ENCODE measurements at regions of chr19 and their contacts with region 1.

Region 1: DNA sequence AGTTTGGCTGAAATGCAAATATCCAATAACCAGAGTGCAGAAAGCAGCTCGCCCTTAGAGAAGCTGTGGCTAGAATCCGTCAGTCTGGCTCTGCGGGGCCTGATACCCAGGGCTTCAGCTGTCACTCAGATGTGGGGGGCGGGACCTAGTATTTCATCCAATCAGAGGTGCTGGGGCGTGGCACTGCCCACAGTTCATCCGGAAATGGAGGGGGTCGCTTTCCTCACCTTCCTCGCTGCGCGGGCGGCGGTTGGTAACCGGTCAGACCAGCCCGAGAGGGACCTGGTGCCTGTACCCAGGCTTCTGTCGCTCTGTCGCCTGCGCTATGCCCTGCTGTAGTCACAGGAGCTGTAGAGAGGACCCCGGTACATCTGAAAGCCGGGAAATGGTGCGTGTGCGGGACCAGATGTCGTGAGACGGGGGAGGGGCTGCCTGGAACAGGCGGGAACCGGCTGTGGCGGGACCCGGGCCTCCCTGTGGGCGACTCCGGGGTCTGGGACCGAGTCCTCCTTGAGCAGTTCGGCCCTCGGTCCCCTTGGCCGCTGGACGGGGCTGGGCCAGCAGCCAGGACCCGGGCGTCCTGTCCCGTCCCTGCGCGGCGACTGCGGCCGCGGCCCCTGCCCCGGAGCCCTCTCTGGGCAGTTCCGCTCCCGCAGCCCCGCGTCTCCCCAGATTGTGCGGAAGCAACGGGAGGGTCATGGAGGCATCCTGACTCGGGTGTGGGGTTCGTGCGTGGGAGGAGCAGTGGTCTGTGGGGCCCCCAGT is at the start of gene ZNF700:
- DNase-seq: peak; percentile 98
- H3K4me3 ChIP-seq: peak within 1 kb of the TSS; percentile 79 to 98
- H3K27ac ChIP-seq: peak within 1 kb of the TSS; percentile 97 to 98
- H3K4me1 ChIP-seq: no peaks in the 10 kb centered on the region
- H3K27me3 ChIP-seq: no peaks in the 10 kb centered on the region
- CTCF ChIP-seq: peak in 1 of 4 experiments; percentile 15
- POLR2A ChIP-seq: peak; percentile 87
- total RNA-seq, gene ZNF700: 16.8 to 18.0 TPM

Region 2: DNA sequence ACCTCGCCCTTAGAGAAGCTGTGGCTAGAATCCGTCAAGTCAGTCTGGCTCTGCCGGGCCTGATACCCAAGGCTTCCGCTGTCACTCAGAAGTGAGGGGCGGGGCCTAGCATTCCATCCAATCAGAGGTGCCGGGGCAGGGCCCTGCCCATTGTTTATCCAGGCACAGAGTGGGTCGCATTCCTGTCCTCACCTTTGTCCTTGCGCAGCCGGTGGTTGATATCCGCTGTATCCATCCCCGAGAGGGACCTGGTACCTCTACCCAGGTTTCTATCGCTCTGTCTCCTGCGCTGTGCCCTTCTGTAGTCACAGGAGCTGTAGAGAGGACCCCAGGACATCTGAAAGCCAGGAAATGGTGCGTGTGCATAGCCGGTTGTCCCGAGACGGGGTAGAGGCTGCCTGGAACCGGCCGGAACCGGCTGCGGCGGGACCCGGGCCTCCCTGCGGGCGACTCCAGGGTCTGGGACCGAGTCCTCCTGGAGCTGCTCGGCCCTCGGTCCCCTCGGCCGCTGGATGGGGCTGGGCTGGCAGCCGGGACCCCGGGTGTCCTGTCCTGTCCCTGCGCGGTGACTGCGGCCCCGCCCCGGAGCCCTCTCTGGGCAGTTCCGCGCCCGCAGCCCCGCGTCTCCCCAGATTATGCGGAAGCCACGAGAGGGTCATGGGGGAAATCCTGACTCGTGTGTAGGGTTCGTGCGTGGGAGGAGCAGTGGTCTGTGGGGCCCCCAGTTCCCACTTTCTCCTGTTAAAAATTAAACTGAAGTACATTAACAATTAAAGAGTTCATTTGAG is 40.0 kb after region 1 on chr19 and contains the start of gene ZNF763:
- intact Hi-C with region 1: loop called (anchors 1 kb)
- DNase-seq: peak; percentile 95
- H3K4me3 ChIP-seq: peak within 1 kb of the TSS; percentile 69 to 71
- H3K27ac ChIP-seq: peak within 1 kb of the TSS; percentile 95 to 97
- H3K4me1 ChIP-seq: no peaks in the 10 kb centered on the region
- H3K27me3 ChIP-seq: no peaks in the 10 kb centered on the region
- CTCF ChIP-seq: no peak
- POLR2A ChIP-seq: peak; percentile 63
- total RNA-seq, gene ZNF763: 4.0 to 5.6 TPM

Region 3: GRCh38 chr19:12244370-12244769 is 319.3 kb after region 1 on chr19:
- intact Hi-C with region 1: no loop called
- DNase-seq: no peak
- H3K4me3 ChIP-seq: no peak overlapping the region
- H3K27ac ChIP-seq: no peak overlapping the region
- H3K4me1 ChIP-seq: no peaks in the 10 kb centered on the region
- H3K27me3 ChIP-seq: no peaks in the 10 kb centered on the region
- CTCF ChIP-seq: no peak
- POLR2A ChIP-seq: no peak

Measured in prostate gland (tissue), 2 donors.